ENCODE measurements at regions of chr19 and their contacts with region 1.

Region 1: DNA sequence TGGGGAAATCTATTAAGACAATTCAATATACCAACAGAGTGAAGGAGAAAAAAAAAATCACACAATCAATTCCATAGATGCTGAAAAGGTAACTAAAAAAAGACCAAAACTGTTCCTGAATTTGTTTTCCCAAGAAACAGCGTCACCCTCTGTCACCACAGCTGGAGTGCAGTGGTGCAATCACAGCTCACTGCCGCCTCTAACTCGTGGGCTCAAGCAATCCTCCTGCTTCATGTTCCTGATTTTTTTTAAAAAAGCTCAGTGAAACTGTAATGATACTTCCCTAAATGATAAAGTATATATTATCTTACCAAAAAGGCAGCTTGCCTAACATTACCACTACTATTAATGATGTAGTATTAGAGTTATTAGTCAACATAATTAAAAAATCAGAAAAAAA is 19.6 kb upstream of the ZFP14 start:
- H3K4me3 ChIP-seq: no peak overlapping the region
- H3K27ac ChIP-seq: no peak overlapping the region
- H3K4me1 ChIP-seq: no peaks in the 10 kb centered on the region
- CTCF ChIP-seq: no peak

Region 2: GRCh38 chr19:36449059-36449670 is 50.6 kb after region 1 on chr19:
- CTCF ChIA-PET with region 1: no interaction called
- POLR2A ChIA-PET with region 1: no interaction called
- H3K4me3 ChIP-seq: no peak overlapping the region
- H3K27ac ChIP-seq: no peak overlapping the region
- H3K4me1 ChIP-seq: no peaks in the 10 kb centered on the region
- CTCF ChIP-seq: no peak

Region 3: GRCh38 chr19:36460046-36460445 is 61.5 kb after region 1 on chr19:
- CTCF ChIA-PET with region 1: no interaction called
- POLR2A ChIA-PET with region 1: no interaction called
- H3K4me3 ChIP-seq: no peak overlapping the region
- H3K27ac ChIP-seq: no peak overlapping the region
- H3K4me1 ChIP-seq: no peaks in the 10 kb centered on the region
- CTCF ChIP-seq: no peak

Region 4: GRCh38 chr19:36483653-36484052 is 85.1 kb after region 1 on chr19:
- CTCF ChIA-PET with region 1: interaction called, 3 read pairs
- POLR2A ChIA-PET with region 1: interaction called, 12 read pairs
- H3K4me3 ChIP-seq: no peak overlapping the region
- H3K27ac ChIP-seq: no peak overlapping the region
- H3K4me1 ChIP-seq: 0 out of 2 replicates have a peak, but pooled peaks cover 1% of the 10 kb centered on the region
- CTCF ChIP-seq: no peak

Measured in HEK293 (cell line).